A673 (cell line): ENCODE measurements at regions of chr11 and their contacts with region 1.

Region 1: DNA sequence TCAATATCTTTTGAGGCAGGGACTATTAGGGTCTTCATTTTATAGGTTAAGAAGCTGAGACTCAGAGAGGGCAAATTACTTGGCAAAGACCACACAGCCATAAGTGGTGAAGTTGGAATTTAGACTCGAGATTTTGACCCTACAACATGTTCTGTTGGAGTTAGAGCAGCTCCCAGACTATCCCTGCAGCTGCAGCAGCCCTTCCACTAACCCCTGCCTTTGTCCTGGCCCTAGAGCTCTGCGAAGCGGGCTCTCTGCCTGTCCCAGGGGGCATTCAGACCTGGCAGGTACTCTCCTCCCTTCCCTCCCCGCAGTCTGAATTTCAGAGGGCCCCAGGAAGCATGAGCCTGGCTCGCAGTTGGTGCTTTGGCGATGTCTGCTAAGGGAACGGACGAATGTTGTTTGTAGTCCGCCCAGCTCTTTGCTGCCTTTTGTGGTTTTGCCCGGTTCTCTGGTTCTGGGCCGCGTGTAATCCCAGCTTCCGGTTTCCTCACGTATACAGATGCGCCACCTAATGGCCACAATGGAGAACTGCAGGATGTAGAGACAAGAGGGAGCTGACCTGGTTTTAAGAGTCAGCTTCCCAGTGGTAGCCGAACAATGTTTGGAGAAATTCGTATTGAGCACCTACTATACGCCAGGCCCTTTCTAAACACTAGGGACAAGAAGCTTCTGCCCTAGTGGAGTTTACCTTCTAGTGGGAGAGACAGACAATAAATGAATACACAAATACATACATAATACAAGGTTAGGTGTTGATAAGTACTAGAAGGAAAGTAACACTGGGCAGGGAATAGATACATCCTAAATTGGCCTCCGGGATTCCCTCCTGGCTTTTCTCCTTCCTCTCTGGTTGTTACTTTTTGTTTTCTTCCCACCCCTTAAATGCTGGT is 125.2 kb downstream of the ST3GAL4 start:
- DNase-seq: peak; percentile 94
- H3K4me3 ChIP-seq: no peak overlapping the region
- H3K27ac ChIP-seq: peak overlapping the region; percentile 61
- H3K4me1 ChIP-seq: peaks cover 19% of the 10 kb centered on the region
- H3K27me3 ChIP-seq: no peaks in the 10 kb centered on the region
- CTCF ChIP-seq: peak; percentile 99

Region 2: GRCh38 chr11:124608146-124608545 is 1872.5 kb before region 1 on chr11:
- CTCF ChIA-PET with region 1: interaction called, 10 read pairs
- POLR2A ChIA-PET with region 1: no interaction called
- intact Hi-C with region 1: no loop called
- DNase-seq: no peak
- H3K4me3 ChIP-seq: no peak overlapping the region
- H3K27ac ChIP-seq: no peak overlapping the region
- H3K4me1 ChIP-seq: peaks cover 12% of the 10 kb centered on the region
- H3K27me3 ChIP-seq: no peaks in the 10 kb centered on the region
- CTCF ChIP-seq: no peak

Region 3: DNA sequence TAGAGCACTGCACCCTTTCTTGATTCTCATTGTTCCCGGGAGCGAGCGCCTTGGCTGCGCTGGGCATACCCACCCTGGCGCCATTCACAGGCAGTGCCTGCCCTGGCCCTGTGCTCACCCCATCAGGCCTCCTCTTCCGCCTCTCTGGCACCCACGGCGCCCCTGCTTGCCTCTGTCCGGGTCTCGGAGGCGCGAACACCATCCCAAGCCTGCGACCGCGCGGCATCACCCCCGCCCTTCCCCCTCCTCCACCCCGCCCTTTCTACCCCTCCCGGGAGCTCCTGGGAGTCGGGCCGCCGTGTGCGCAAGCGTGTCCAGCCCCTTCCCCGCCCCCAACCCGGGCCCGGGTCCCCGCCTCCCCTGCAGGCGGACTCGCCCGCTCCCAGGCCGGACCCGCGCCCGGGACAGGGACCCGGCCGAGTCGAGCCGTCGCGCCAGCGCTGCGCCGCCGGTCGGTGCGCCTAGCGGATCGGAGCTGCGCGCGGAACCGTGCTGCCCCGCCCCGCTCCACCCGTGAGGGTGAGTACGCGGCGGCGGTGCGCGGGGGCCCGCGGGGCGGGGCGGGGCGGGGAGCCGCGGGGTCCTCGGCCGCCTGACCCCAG is 125.2 kb before region 1 on chr11 and contains the start of gene ST3GAL4:
- CTCF ChIA-PET with region 1: no interaction called
- POLR2A ChIA-PET with region 1: no interaction called
- intact Hi-C with region 1: no loop called
- DNase-seq: peak; percentile 88
- H3K4me3 ChIP-seq: peak within 1 kb of the TSS; percentile 62
- H3K27ac ChIP-seq: peak within 1 kb of the TSS; percentile 77
- H3K4me1 ChIP-seq: peaks cover 39% of the 10 kb centered on the region
- H3K27me3 ChIP-seq: no peaks in the 10 kb centered on the region
- CTCF ChIP-seq: no peak
- total RNA-seq, gene ST3GAL4: 26.4 and 29.9 TPM in 2 replicates

Region 4: DNA sequence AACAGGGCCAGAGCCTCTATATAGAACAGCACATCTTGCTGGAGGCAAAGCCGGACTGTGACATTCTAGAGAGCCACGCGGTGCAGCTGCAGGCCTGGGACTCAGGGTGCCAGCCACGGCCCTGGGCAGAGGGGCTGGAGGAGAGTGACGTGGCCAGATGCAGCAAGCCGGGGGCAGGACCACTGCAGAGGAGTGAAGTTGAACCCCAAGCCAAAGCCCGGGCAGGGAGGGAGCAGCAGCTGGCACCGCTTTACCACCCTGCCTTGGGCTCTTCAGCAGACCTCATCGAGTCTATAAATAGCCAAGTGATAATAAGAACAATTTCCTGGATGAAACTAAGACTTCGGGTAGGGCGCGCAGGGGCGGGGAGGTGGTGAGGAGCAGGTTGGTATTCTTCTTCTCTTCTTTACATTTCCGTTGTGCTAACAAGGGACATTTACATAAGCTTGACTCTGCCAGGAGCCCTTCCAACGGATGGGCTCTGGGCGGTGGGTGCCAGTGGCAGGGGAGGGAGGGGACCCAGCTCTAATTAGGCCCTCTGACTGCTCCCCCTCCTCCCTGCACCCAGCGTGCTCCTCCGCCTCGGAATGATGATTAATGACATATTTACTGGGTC is 15.0 kb before region 1 on chr11:
- CTCF ChIA-PET with region 1: interaction called, 18 read pairs
- POLR2A ChIA-PET with region 1: interaction called, 3 read pairs
- intact Hi-C with region 1: no loop called
- DNase-seq: peak; percentile 92
- H3K4me3 ChIP-seq: no peak overlapping the region
- H3K27ac ChIP-seq: peak overlapping the region; percentile 64
- H3K4me1 ChIP-seq: peaks cover 44% of the 10 kb centered on the region
- H3K27me3 ChIP-seq: no peaks in the 10 kb centered on the region
- CTCF ChIP-seq: no peak